Activated naive CD4-positive, alpha-beta T cell treated with anti-CD3 and anti-CD28 coated beads for 36 hours (primary cell): ENCODE measurements at regions of chr12 and their contacts with region 1.

Region 1: DNA sequence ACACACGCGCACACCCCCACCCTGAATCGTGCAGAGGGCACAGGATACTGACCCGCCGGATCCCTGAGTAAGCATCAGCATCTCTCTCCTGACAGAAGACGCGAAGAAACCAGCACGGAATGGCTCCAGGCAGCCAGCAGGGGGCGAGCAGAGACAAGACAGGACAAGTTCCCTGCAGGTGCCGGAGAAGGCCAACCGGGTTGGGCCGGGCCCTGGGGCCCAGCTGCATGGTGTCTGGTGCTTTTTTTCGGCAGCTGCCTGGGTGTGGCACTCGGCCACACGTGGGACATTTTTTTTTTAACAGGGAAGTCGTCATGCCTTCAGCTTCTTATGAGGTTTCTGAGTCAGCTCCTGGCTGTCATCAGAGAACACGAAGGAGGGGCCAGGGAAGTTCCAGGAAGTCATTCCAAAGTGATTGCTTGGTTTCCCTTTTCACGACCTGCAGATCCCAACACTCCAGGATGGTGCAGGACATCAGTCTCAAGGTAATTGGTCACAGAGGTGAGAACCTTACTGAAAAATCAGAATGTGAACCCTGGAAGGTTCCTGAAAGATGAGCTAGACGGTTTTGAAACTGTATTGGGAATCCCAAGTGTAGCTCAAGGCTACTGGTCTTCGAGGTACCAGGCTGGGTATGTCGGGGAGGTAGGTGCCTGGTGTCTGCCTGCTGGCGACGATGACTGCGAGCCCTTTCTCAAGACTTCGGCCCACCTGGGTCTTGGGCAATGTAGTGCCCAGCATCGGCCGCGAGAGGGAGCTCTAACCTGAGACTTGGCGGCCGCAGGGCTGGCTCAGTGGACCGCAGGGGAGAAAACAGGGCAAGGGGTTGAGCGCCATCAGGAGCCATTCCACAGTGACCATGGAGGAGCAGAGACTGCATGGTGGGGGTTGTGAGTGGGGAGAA is 190.8 kb upstream of the PRMT8 start:
- DNase-seq: peak; percentile 92
- H3K4me3 Mint-ChIP-seq: peak overlapping the region; percentile 54
- H3K27ac Mint-ChIP-seq: peak overlapping the region; percentile 66
- H3K4me1 Mint-ChIP-seq: peaks cover 11% of the 10 kb centered on the region
- H3K27me3 Mint-ChIP-seq: peaks cover 6% of the 10 kb centered on the region

Region 2: DNA sequence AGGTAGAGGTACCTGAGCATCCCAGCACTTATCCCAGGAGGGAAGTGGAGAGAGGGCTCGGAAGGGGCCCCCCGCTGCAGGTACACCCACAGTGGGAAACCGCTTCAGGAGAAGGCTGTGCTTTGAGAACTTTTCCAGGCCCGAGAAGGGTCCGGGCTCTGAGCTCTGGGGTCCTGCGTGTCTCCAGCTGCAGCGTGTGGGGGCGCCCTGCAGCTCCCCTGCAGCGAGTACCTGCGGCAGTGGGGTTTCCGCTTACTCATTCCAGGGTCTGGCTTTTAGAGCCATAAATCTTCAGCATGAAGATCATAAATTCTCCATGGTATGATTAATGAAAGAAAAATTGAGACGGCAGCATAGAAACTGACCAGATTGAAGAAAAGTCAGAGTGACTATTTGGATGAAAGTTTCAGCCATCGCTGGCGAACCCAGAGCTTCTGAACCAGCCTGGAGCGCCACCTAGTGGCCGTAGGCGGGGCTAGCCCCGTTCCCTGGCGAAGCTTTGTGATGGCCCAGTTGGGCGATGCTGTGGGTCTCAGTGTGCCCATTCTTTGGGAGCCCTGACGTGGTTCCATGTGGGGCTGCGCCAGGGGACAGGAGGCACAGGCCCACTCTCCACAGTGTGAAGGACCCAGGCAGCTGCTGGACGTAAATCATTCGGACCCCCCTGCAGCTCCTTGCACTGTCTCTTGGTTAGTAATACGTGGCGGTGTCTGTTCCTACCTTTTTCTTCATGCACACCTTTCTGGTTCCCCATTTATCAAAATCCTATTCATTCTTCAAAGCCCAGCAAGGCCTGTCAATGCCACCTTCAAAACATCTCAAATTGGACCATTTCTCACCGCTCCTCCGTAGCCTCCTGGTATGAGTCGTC is 24.8 kb before region 1 on chr12:
- CTCF ChIA-PET with region 1: interaction called, 15 read pairs
- intact Hi-C with region 1: no loop called
- DNase-seq: peak; percentile 82
- H3K4me3 Mint-ChIP-seq: no peak overlapping the region
- H3K27ac Mint-ChIP-seq: no peak overlapping the region
- H3K4me1 Mint-ChIP-seq: no peaks in the 10 kb centered on the region
- H3K27me3 Mint-ChIP-seq: no peaks in the 10 kb centered on the region

Region 3: DNA sequence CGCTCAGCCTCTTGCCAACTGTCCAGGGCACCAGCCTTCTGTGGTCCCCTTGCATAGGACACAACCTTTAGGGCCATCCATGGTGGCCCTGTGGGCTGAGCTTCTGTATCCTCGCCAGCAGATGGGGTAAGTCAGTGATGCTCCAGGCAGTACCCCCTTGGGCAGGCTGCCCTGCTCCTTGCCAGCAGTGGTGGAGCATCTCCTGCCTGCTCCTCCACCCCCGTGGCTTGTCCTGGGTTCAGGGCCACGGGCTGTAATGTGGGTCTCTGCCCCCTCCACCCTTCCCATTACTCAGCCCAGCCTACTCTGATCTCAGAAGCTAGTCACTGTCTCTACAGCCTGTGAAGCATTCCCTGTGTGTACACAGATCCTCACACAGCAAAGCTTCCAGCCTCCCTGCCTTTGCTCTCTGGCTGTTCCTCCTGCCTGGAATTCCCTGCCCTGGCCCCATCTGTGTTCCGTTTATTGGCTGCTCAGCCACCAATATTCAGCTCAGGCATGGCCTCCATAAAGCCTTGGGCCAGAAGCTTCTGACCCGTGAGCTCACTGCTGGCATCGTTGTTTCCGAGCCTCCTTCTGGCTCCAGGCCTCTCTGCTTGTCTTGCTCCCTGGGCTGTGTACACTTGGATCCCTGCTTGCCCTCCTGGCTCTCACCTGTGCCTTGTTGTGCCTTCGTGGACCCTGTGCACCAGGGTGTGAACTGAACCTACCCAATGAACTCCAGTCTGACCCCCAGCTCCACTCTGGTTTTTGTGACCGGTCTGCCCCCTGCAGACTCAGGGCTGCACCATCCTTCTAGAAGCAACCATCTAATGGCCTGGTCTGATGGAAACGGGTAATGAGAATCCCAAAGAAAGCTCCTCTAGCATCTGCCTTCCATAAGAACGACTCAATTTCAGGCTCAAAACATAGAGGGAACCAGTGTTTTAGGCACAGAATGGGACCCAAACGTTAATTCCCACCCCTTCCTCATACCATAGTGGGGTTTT is 13.8 kb after region 1 on chr12:
- CTCF ChIA-PET with region 1: interaction called, 24 read pairs
- intact Hi-C with region 1: no loop called
- DNase-seq: peak; percentile 24
- H3K4me3 Mint-ChIP-seq: no peak overlapping the region
- H3K27ac Mint-ChIP-seq: no peak overlapping the region
- H3K4me1 Mint-ChIP-seq: no peaks in the 10 kb centered on the region
- H3K27me3 Mint-ChIP-seq: peaks cover 2% of the 10 kb centered on the region

Region 4: GRCh38 chr12:3770886-3771285 is 470.7 kb after region 1 on chr12:
- CTCF ChIA-PET with region 1: interaction called, 22 read pairs
- intact Hi-C with region 1: no loop called
- DNase-seq: no peak
- H3K4me3 Mint-ChIP-seq: no peak overlapping the region
- H3K27ac Mint-ChIP-seq: no peak overlapping the region
- H3K4me1 Mint-ChIP-seq: peaks cover 8% of the 10 kb centered on the region
- H3K27me3 Mint-ChIP-seq: no peaks in the 10 kb centered on the region

Region 5: DNA sequence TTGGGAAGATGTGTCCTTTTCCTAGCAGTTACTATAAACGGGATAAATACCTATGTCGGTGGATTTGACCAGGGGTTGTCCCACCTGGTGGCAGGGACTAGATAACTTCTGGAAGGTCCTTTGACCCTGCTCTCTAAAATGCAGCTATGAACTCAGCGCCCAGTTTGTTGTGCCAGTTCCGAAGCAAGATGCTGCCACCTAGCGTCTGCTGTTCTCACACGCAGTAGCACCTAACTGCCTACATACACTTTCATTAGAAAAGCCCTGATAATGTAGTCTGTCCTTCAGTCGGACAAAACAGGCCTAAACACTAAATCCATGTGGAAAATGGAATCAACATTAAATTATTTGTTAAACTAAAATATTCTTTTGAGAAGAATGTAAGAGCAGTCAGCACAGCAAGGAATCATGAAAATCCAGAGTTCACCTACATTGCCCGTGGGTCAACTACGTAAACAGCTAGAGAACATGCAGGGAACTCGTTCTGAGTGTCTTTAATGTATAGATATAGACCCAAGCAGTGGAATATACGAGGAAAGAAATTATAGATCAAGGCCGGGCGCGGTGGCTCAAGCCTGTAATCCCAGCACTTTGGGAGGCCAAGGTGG is 503.8 kb after region 1 on chr12:
- CTCF ChIA-PET with region 1: interaction called, 53 read pairs
- intact Hi-C with region 1: loop called (anchors 1 kb)
- DNase-seq: peak; percentile 89
- H3K4me3 Mint-ChIP-seq: no peak overlapping the region
- H3K27ac Mint-ChIP-seq: no peak overlapping the region
- H3K4me1 Mint-ChIP-seq: peaks cover 15% of the 10 kb centered on the region
- H3K27me3 Mint-ChIP-seq: no peaks in the 10 kb centered on the region